Head of caudate nucleus (tissue), 42 donors: ENCODE measurements at regions of chr14 and their contacts with region 1.

Region 1: GRCh38 chr14:32252030-32252670 is 49.1 kb upstream of the RNU6-8 start:
- DNase-seq: peak in 39 of 42 donors; percentile 11 to 88 (median 65)

Region 2: GRCh38 chr14:31505411-31505810 is 746.7 kb before region 1 on chr14:
- intact Hi-C with region 1: loop called (anchors 5 kb)
- DNase-seq: no peak

Region 3: GRCh38 chr14:31937721-31938346 is 314.3 kb before region 1 on chr14:
- intact Hi-C with region 1: loop called (anchors 5 kb)
- DNase-seq: peak; percentile 25 to 88 (median 60)